GM10248 (cell line): ENCODE measurements at regions of chr13 and their contacts with region 1.

Region 1: DNA sequence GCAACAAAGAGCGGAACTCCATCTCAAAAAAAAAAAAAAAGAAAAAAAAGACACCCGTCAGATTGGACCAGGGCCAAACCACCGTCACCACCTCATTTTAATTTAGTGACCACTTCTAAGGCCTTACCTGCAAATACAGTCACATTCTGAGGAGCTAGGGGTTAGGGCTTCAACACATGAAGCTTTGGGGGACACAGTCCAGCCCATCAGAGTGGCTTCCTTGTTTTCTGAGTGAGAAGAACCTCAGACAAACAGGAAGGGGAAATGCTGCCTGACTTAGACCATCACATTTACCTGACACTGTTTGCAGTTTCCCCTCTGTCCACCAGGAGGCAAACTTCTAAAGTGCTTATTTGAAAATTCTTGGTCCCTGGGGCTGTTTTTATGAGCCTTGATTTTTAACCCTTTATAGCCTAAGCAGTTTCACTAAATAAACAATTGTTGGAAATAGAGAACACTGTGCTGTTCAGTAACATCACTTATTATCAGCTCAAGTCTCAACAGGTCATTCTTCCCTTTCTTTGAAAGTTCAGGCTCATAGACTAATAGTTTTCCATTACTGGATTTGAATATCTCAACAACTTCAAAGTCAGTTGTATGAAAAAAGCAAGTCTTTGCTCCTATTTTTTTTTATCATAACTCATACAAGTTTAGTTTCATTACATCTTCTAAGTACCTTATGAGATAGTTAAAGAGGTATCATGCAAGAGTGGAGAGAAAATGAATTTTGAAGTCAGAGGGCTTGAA is 74.9 kb upstream of the WASF3 start:
- DNase-seq: peak; percentile 79
- CTCF ChIP-seq: peak; percentile 82

Region 2: GRCh38 chr13:26495750-26496149 is 13.1 kb after region 1 on chr13:
- CTCF ChIA-PET with region 1: interaction called, 12 read pairs
- POLR2A ChIA-PET with region 1: no interaction called
- DNase-seq: no peak
- CTCF ChIP-seq: no peak

Region 3: DNA sequence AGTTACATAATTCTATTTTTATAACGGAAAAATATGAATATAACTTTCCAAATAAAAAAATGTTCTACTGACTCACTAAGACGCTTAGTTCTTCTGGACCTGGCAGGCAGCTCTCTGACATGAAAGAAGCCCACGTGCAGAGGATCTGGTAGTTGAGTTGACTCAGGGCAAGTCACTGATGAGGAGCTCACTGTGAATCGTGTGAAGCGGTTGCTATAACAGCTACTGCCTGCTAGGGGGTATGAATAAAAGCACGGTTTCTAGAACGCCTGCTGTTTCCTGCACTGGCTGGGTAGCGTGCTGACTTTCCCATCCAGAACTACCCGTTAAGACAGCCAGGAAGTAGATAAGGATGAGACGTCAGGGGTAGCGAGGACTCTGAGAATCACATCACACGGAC is 20.2 kb after region 1 on chr13:
- CTCF ChIA-PET with region 1: interaction called, 11 read pairs
- POLR2A ChIA-PET with region 1: no interaction called
- DNase-seq: no peak
- CTCF ChIP-seq: no peak